ENCODE measurements at regions of chr11 and their contacts with region 1.

Region 1: GRCh38 chr11:120215634-120216033 is 4.8 kb downstream of the OAF start:
- DNase-seq: no peak
- H3K4me3 ChIP-seq: peak overlapping the region in 1 of 3 donors; percentile 7
- H3K27ac ChIP-seq: peak overlapping the region; percentile 67 to 82
- H3K4me1 ChIP-seq: peaks cover 0 to 21% of the 10 kb centered on the region in 2 donors
- H3K27me3 ChIP-seq: no peaks in the 10 kb centered on the region
- CTCF ChIP-seq: no peak
- POLR2A ChIP-seq: no peak

Region 2: DNA sequence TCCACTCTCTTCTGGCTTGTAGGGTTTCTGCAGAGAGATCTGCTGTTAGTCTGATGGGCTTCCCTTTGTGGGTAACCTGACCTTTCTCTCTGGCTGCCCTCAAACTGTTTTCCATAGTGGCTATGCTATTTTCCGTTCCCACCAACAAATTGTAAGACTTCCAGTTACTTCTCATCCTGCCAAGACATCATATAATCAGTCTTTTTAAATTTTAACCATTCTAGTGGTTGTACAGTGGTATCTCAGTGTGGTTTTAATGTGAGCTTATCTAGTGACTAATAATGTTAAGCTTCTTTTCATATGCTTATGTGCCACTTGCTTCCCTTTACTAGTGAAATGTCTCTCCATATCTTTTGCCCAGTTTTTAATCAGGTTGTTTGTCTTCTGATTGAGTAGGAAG is 64.1 kb before region 1 on chr11:
- intact Hi-C with region 1: no loop called
- DNase-seq: no peak
- H3K4me3 ChIP-seq: no peak overlapping the region
- H3K27ac ChIP-seq: no peak overlapping the region
- H3K4me1 ChIP-seq: no peaks in the 10 kb centered on the region
- H3K27me3 ChIP-seq: no peaks in the 10 kb centered on the region
- CTCF ChIP-seq: no peak
- POLR2A ChIP-seq: no peak

Region 3: DNA sequence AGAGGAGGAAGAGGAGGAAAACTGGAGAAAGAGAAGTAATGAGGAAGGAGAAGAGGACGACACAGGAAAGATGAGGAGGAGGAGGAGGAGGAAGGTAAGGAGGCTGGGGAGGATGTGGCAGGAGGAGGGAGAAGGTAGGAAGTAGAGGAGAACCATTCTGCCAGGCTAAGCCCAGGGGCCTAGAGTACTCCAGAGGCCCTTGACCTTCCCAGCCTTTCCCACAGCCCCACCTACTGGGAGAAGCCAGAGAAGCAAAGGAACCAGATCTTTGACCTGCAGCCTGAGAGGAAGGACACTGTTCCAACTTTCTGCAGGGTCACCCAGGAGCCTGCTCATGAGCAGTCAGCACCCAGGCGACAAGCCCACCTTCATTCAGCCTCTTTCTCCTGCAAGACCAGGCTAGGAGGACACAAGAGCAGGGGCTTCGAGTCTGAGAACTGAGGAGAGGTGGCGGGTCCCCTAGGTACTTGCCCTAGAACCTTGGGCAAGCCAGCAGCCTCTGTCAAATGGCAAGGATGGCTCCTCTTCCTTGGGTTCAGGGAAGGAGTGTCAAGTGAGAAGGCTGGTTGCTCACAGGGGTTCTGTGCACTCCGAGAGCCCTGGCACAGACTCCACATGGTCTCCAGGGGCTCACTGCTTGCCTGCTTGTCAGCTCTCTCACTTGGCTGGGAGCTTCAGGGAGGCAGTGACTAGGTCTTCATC is 32.7 kb before region 1 on chr11:
- intact Hi-C with region 1: loop called (anchors 5 kb)
- DNase-seq: peak in 1 of 2 donors; percentile 18
- H3K4me3 ChIP-seq: no peak overlapping the region
- H3K27ac ChIP-seq: peak overlapping the region; percentile 50 to 96
- H3K4me1 ChIP-seq: peaks cover 0 to 3% of the 10 kb centered on the region in 2 donors
- H3K27me3 ChIP-seq: no peaks in the 10 kb centered on the region
- CTCF ChIP-seq: no peak
- POLR2A ChIP-seq: no peak

Measured in breast epithelium (tissue), 4 donors.